Colonic mucosa (tissue), 4 donors: ENCODE measurements at regions of chr14 and their contacts with region 1.

Region 1: DNA sequence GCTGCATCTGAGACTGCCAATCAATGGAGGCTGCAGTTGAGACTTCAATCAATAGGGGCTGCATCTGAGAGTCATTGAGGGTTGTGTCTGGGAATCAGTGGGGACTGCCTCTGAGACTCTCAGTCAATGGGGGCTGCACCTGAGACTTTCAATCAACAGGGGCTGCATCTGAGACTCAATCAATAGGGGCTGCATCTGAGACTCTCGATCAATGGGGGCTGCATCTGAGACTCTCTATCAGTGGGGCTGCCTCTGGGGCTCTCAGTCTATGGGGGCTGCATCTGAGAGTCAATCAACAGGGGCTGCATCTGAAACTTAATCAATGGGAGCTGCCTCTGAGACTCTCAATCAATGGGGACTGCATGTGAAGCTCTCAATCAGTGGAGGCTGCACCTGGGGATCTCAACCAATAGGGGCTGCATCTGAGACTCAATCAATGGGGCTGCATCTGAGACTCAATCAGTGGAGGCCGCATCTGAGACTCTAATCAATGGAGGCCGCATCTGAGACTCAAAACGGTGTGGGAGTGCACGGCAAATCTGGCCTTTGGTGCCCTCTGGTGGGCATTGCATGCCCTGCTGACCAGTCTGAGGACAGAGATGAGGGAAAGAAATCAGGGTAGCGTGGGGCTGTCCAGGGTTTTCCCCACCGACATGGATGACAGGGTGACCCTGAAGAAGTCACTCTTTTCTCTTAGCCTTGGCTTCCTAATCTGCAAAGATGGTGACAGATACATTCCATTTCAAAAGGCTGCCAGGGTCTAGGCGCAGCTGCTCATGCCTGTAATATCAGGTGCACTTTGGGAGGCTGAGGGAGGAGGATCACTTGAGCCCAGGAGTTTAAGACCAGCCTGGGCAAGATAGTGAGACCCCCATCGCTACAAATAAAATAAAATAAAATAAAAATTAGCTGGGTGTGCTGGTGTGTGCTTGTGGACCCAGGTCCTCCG is 41.3 kb upstream of the EIF5 start:
- DNase-seq: peak; percentile 81
- H3K4me3 ChIP-seq: no peak overlapping the region
- H3K27ac ChIP-seq: no peak overlapping the region
- H3K4me1 ChIP-seq: no peaks in the 10 kb centered on the region
- H3K27me3 ChIP-seq: no peaks in the 10 kb centered on the region
- CTCF ChIP-seq: peak; percentile 88

Region 2: GRCh38 chr14:103078093-103078749 is 214.5 kb before region 1 on chr14:
- intact Hi-C with region 1: loop called (anchors 2 kb)
- DNase-seq: peak; percentile 84
- H3K4me3 ChIP-seq: no peak overlapping the region
- H3K27ac ChIP-seq: no peak overlapping the region
- H3K4me1 ChIP-seq: peaks cover 8% of the 10 kb centered on the region
- H3K27me3 ChIP-seq: no peaks in the 10 kb centered on the region
- CTCF ChIP-seq: peak; percentile 71

Region 3: GRCh38 chr14:103104654-103105452 is 187.8 kb before region 1 on chr14:
- intact Hi-C with region 1: loop called (anchors 10 kb)
- DNase-seq: peak; percentile 82
- H3K4me3 ChIP-seq: no peak overlapping the region
- H3K27ac ChIP-seq: no peak overlapping the region
- H3K4me1 ChIP-seq: peaks cover 15% of the 10 kb centered on the region
- H3K27me3 ChIP-seq: peaks cover 23% of the 10 kb centered on the region
- CTCF ChIP-seq: peak; percentile 92

Region 4: GRCh38 chr14:103160866-103161391 is 131.8 kb before region 1 on chr14:
- intact Hi-C with region 1: no loop called
- DNase-seq: no peak
- H3K4me3 ChIP-seq: no peak overlapping the region
- H3K27ac ChIP-seq: no peak overlapping the region
- H3K4me1 ChIP-seq: no peaks in the 10 kb centered on the region
- H3K27me3 ChIP-seq: no peaks in the 10 kb centered on the region
- CTCF ChIP-seq: no peak

Region 5: GRCh38 chr14:103185051-103185992 is 107.4 kb before region 1 on chr14:
- intact Hi-C with region 1: loop called (anchors 5 kb)
- DNase-seq: no peak
- H3K4me3 ChIP-seq: no peak overlapping the region
- H3K27ac ChIP-seq: no peak overlapping the region
- H3K4me1 ChIP-seq: no peaks in the 10 kb centered on the region
- H3K27me3 ChIP-seq: peaks cover 4% of the 10 kb centered on the region
- CTCF ChIP-seq: peak; percentile 66

Region 6: GRCh38 chr14:103973354-103973753 is 680.7 kb after region 1 on chr14:
- intact Hi-C with region 1: no loop called
- DNase-seq: no peak
- H3K4me3 ChIP-seq: no peak overlapping the region
- H3K27ac ChIP-seq: no peak overlapping the region
- H3K4me1 ChIP-seq: no peaks in the 10 kb centered on the region
- H3K27me3 ChIP-seq: no peaks in the 10 kb centered on the region
- CTCF ChIP-seq: no peak